ENCODE measurements at regions of chr17 and their contacts with region 1.

Region 1: DNA sequence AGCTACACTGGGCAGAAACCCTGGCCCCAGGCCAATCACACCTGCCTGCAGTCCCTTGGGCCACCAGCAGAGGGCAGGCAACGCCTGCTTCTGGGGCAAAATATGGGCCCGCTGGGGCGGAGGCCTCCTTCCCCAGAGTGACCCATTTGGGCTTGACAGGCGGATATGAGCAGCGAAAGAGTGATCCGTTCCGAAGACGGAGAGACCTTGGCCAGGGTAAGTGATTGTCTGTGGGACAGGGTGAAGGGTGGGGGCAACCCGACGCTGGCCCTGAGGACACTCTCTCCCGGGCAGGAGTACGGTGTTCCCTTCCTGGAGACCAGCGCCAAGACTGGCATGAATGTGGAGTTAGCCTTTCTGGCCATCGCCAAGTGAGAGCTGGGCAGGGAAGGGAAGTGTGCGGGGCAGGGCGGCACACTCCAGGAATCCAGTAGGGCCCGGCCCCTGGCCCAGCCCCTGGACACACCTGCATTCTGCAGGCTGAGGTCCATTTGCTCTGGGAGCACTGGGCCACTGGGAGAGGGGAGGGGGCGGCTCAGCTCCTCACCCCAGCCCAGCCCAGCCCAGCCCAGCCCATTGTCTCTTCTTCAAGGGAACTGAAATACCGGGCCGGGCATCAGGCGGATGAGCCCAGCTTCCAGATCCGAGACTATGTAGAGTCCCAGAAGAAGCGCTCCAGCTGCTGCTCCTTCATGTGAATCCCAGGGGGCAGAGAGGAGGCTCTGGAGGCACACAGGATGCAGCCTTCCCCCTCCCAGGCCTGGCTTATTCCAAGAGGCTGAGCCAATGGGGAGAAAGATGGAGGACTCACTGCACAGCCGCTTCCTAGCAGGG is 3.5 kb upstream of the NHERF1 start:
- DNase-seq: peak; percentile 87 to 95 (median 92)
- ATAC-seq: peak; percentile 43
- H3K4me3 ChIP-seq: no peak overlapping the region
- H3K27ac ChIP-seq: peak overlapping the region; percentile 33 to 84 (median 69)
- H3K4me1 ChIP-seq: peaks cover 23% of the 10 kb centered on the region
- H3K27me3 ChIP-seq: no peaks in the 10 kb centered on the region
- CTCF ChIP-seq: peak; percentile 98 to 100 (median 99)
- POLR2A ChIP-seq: peak in 1 of 3 donors; percentile 15

Region 2: DNA sequence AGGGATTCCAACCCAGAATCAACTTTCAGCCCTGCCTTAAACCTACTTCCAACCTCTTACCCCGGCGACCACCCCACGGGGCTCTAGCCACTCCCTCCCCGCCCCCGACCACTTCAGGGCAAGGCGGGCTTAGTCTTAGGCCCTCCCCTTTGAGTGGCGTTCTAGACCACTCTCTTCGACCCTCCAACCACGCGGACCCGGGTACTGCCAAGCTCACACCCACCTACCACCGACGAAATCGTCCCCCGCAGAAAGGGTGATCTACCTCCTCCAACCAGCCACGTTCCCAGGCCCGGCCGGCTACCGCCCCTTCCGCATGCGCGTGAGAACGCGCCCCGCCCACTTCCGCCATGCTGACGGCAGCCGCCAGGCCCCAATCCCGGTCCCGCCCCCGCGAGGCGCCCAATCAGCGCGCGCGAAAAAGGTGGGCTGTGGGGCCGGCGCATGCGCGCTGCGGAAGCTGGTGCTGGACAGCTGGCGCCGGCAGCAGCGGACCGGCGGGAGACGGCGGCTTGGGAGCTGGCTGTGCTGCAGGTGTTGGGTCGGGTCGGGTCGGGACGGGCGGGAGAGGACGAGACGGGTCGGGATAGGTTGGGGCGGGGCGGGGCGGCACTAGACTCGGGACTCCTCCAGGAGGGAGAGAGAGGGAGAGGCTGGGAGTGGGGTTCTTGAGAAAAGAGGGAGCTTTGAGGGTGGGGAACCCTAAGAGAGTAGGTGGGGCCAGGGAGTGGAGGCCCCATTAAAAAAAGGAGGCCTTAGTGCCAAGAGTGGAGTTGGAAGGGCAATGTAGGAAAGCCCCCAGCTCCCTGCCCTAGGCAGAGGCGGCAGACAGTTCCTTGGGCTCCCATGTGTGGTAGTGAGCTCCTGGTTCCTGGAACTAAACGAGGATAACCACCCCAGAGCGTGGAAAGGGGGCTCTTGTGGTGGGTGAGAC is 31.4 kb after region 1 on chr17 and contains the start of gene NAT9:
- intact Hi-C with region 1: loop called (anchors 5 kb)
- DNase-seq: peak; percentile 97 to 99 (median 98)
- ATAC-seq: peak; percentile 98
- H3K4me3 ChIP-seq: peak within 1 kb of the TSS; percentile 82 to 92
- H3K27ac ChIP-seq: peak within 1 kb of the TSS; percentile 26 to 73 (median 61)
- H3K4me1 ChIP-seq: peaks cover 31% of the 10 kb centered on the region
- H3K27me3 ChIP-seq: no peaks in the 10 kb centered on the region
- CTCF ChIP-seq: peak in 1 of 7 experiments; percentile 30
- POLR2A ChIP-seq: peak in 2 of 3 donors; percentile 51 to 61
- total RNA-seq, gene NAT9: 21.8 to 23.3 TPM

Region 3: GRCh38 chr17:74864866-74865395 is 120.0 kb after region 1 on chr17:
- intact Hi-C with region 1: loop called (anchors 5 kb)
- DNase-seq: peak; percentile 73 to 82 (median 78)
- ATAC-seq: peak; percentile 67
- H3K4me3 ChIP-seq: no peak overlapping the region
- H3K27ac ChIP-seq: no peak overlapping the region
- H3K4me1 ChIP-seq: peaks cover 21% of the 10 kb centered on the region
- H3K27me3 ChIP-seq: peaks cover 4 to 22% of the 10 kb centered on the region in 2 donors
- CTCF ChIP-seq: peak; percentile 90 to 94 (median 92)
- POLR2A ChIP-seq: no peak

Region 4: DNA sequence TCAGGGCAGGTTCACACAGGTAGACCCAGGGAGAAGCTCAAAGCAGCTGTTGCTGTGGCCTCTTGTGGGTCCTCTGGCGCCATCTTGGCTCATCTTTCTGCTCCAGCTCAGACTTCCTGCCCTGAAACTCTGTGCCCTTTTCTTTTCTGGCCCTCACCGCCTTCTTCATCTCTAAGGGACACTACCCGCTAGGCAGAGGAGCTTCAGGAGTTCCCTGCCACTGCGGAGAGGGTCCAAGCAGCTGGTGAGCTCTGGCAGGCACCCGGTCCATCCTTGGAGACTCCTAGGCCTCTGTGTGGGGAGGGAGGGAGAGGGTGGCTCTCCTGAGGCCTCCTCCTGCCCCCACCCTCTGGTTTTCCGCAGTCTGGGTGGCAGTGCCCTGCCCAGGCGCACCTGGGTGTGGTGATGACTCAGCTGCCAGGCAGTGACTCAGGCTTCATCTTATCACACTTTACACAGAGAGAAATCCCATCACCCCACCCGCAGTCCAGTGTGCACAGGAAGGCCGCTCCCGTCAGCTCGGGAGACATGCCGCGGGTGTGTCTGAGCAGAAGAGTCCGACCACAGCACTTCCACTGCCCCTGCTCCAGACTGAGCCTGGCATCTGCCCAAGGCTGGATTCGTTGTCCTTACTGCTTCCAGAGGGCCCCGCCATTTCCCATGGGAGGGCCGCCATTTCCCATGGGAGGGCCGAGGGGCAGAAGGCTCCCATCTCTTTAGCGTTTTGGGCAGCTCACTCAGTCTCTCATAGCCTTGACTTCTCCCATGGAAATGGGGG is 379.3 kb after region 1 on chr17:
- intact Hi-C with region 1: no loop called
- DNase-seq: peak; percentile 28 to 81 (median 50)
- ATAC-seq: peak; percentile 70
- H3K4me3 ChIP-seq: no peak overlapping the region
- H3K27ac ChIP-seq: no peak overlapping the region
- H3K4me1 ChIP-seq: peaks cover 9% of the 10 kb centered on the region
- H3K27me3 ChIP-seq: no peaks in the 10 kb centered on the region
- CTCF ChIP-seq: no peak
- POLR2A ChIP-seq: no peak